ENCODE measurements at regions of chr12 and their contacts with region 1.

Region 1: GRCh38 chr12:76621582-76622024 is 62.0 kb upstream of the OSBPL8 start:
- DNase-seq: peak; percentile 72
- ATAC-seq: peak; percentile 81
- H3K4me3 ChIP-seq: no peak overlapping the region
- H3K27ac ChIP-seq: no peak overlapping the region
- H3K4me1 ChIP-seq: peaks cover 5% of the 10 kb centered on the region; the same call in 1 of the 2 replicates
- H3K27me3 ChIP-seq: no peaks in the 10 kb centered on the region
- CTCF ChIP-seq: peak; percentile 97
- POLR2A ChIP-seq: peak; percentile 55; the same call in 1 of the 2 replicates
- RAD21 ChIP-seq: peak; percentile 100

Region 2: DNA sequence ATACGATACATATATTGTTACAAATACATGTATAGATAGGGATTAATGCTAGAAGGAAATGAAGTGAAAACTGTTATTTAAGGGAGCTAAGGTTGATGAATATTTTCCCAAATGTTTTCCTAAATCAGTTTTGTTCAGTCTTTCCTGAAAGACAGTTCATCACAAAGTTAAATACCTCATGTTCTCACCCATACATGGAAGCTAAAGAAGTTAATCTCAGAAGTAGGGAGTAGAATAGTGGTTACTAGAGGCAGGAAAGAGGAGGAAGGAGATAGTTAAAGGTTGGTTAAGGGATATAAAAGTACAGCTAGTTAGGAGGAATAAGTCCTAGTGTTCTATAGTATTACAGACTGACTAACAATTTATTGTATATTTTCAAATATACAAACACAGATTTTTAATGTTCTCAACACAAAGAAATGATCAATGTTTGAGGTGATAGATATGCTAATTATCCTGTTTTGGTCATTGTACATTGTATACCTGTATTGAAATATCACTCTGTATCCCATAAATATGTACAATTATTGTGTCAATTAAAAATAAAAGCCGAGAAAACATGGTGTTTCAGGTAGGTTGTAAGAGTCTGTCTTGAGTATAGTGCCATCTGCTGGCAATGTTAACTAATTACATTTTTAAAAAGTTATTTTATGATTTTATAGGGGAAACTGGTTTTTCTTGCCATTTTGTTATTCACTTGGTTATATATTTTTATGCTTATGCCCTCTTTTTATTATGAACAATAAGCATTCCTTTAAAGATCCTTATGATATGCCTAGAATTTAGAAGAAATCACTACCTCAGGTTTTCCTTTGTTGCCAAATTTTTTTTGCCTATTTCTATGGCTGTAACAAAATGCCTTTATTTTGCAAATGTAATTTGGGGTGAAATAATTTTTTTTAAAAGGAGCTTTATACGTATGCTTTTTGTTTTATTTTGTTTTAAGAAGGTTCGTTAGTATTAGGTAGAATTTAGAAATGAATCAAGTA is 169.3 kb after region 1 on chr12:
- CTCF ChIA-PET with region 1: interaction called, 13 read pairs
- POLR2A ChIA-PET with region 1: no interaction called
- dilution Hi-C with region 1: no loop called
- in situ Hi-C with region 1: loop called (anchors 5 kb)
- intact Hi-C with region 1: loop called (anchors 1 kb)
- DNase-seq: peak; percentile 37
- ATAC-seq: no peak
- H3K4me3 ChIP-seq: no peak overlapping the region
- H3K27ac ChIP-seq: no peak overlapping the region
- H3K4me1 ChIP-seq: no peaks in the 10 kb centered on the region; the same call in 1 of the 2 replicates
- H3K27me3 ChIP-seq: no peaks in the 10 kb centered on the region
- CTCF ChIP-seq: peak; percentile 72
- POLR2A ChIP-seq: no peak
- RAD21 ChIP-seq: peak; percentile 84

Region 3: GRCh38 chr12:76927170-76927784 is 305.7 kb after region 1 on chr12:
- CTCF ChIA-PET with region 1: no interaction called
- POLR2A ChIA-PET with region 1: no interaction called
- dilution Hi-C with region 1: no loop called
- in situ Hi-C with region 1: no loop called
- intact Hi-C with region 1: loop called (anchors 1 kb)
- DNase-seq: peak; percentile 57
- ATAC-seq: peak; percentile 86
- H3K4me3 ChIP-seq: no peak overlapping the region
- H3K27ac ChIP-seq: no peak overlapping the region
- H3K4me1 ChIP-seq: peaks cover 3% of the 10 kb centered on the region; the same call in 1 of the 2 replicates
- H3K27me3 ChIP-seq: no peaks in the 10 kb centered on the region; the same call in 1 of the 2 replicates
- CTCF ChIP-seq: peak; percentile 64
- POLR2A ChIP-seq: no peak
- RAD21 ChIP-seq: peak; percentile 74